HepG2 (cell line): ENCODE measurements at regions of chr10 and their contacts with region 1.

Region 1: GRCh38 chr10:95279042-95279820 is 11.6 kb downstream of the PDLIM1 start:
- DNase-seq: no peak
- ATAC-seq: no peak
- H3K4me3 ChIP-seq: no peak overlapping the region; a peak in 1 of 6 replicates
- H3K27ac ChIP-seq: peak overlapping the region; percentile 68
- H3K4me1 ChIP-seq: peaks cover 99% of the 10 kb centered on the region
- H3K27me3 ChIP-seq: no peaks in the 10 kb centered on the region
- CTCF ChIP-seq: no peak
- EP300 ChIP-seq: no peak
- POLR2A ChIP-seq: no peak
- RAD21 ChIP-seq: no peak

Region 2: DNA sequence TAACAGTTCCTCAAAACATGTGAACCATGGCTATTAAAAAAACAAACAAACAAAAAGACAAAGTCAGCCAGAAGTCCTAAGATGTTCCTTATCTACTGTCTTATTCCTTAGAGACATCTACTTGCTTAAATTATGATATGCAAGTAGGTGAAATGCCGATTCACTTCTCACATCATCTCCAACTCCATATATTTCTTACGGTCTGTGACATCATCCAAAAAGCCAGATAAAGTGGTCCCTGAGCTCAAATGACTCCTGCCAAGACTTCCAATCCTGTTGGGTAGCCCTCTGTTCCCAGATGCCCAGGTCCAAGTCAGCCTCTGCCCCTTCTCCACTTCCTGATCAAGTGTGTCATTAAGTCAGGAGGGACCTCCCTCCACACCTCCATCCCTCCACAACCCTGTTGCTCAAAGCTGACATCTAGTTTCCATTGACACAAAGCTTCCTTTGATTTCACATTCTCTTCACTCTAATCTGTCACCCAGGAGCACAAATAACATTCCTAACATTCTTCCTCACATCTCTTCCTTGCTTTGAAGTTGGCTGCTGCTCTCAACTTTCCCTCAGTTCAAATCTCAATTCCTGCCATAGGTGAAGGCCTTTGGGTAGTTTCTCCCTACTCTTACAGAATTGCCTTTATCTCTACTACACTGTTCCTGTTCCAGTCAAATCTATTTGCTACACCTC is 67.6 kb after region 1 on chr10:
- CTCF ChIA-PET with region 1: no interaction called
- POLR2A ChIA-PET with region 1: interaction called, 14 read pairs
- in situ Hi-C with region 1: no loop called
- intact Hi-C with region 1: no loop called
- DNase-seq: peak; percentile 99
- ATAC-seq: peak; percentile 94
- H3K4me3 ChIP-seq: no peak overlapping the region
- H3K27ac ChIP-seq: peak overlapping the region; percentile 78
- H3K4me1 ChIP-seq: peaks cover 93% of the 10 kb centered on the region
- H3K27me3 ChIP-seq: no peaks in the 10 kb centered on the region
- CTCF ChIP-seq: no peak; the same call in 1 of the 2 replicates
- EP300 ChIP-seq: peak; percentile 85 to 96; a peak in 3 of 4 replicates
- POLR2A ChIP-seq: peak in 1 of 2 experiments; percentile 13; a peak in 1 of 4 replicates
- RAD21 ChIP-seq: 0 out of 2 replicates have a peak, but pooled peaks have one; percentile 31